ENCODE measurements at regions of chr11 and their contacts with region 1.

Region 1: GRCh38 chr11:70816156-70816678 is 417.9 kb downstream of the CTTN start:
- DNase-seq: no peak
- H3K4me3 Mint-ChIP-seq: no peak overlapping the region
- H3K27ac Mint-ChIP-seq: no peak overlapping the region
- H3K4me1 Mint-ChIP-seq: no peaks in the 10 kb centered on the region
- H3K27me3 Mint-ChIP-seq: peaks cover 2% of the 10 kb centered on the region

Region 2: GRCh38 chr11:70804139-70804837 is 11.9 kb before region 1 on chr11:
- CTCF ChIA-PET with region 1: interaction called, 16 read pairs
- intact Hi-C with region 1: no loop called
- DNase-seq: no peak
- H3K4me3 Mint-ChIP-seq: no peak overlapping the region
- H3K27ac Mint-ChIP-seq: no peak overlapping the region
- H3K4me1 Mint-ChIP-seq: no peaks in the 10 kb centered on the region
- H3K27me3 Mint-ChIP-seq: peaks cover 5% of the 10 kb centered on the region

Region 3: DNA sequence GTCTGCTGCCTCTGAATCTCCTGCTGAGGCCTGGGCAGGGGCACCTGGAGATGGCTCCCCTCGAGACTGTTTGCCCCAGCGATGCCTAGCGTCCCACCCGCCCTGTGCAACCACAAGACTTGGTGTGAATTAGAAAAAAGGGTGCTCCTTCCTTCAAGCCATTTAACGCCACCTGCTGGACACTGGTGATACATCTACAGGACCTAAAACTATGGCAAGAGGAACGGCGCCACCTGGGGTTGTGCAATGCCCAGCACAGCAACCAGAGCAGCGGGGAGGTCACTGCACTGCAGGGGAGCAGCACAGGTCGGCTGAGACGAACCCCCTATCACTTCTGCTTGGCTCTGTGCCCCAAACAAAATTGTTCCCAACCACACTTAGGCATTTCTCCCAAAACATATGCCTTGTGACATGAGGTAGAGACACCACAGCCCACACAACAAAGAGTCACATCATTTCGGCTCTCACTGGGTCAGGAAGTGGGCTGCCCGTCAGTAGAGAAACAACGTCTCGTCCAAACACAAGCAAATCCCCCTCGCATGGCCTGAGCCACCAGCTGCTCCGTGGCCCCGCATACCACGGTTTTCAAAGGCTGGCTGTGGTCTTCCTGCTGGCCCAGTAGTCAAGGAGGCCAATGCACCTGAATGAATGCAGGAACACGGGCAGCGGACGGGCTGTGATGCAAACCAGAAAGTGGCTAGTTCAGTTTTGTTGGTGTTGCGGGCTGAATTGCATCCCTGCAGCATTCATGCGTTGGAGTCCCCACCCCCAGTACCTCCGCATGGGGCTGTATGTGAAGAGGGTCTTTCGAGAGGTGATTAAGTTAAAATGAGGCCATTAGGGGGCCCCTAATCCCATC is 264.3 kb after region 1 on chr11:
- CTCF ChIA-PET with region 1: interaction called, 5 read pairs
- intact Hi-C with region 1: loop called (anchors 1 kb)
- DNase-seq: peak; percentile 82
- H3K4me3 Mint-ChIP-seq: no peak overlapping the region
- H3K27ac Mint-ChIP-seq: no peak overlapping the region
- H3K4me1 Mint-ChIP-seq: no peaks in the 10 kb centered on the region
- H3K27me3 Mint-ChIP-seq: peaks cover 13% of the 10 kb centered on the region

Measured in activated naive CD4-positive, alpha-beta T cell treated with anti-CD3 and anti-CD28 coated beads for 36 hours (primary cell).